Adrenal gland (tissue), 19 donors: ENCODE measurements at regions of chr11 and their contacts with region 1.

Region 1: GRCh38 chr11:17598700-17599459 is 51.8 kb downstream of the OTOG start:
- DNase-seq: peak; percentile 46 to 82 (median 73)
- H3K4me3 ChIP-seq: no peak overlapping the region
- H3K27ac ChIP-seq: no peak overlapping the region
- H3K4me1 ChIP-seq: no peaks in the 10 kb centered on the region
- H3K27me3 ChIP-seq: no peaks in the 10 kb centered on the region
- CTCF ChIP-seq: peak; percentile 66 to 92 (median 82)
- POLR2A ChIP-seq: no peak

Region 2: DNA sequence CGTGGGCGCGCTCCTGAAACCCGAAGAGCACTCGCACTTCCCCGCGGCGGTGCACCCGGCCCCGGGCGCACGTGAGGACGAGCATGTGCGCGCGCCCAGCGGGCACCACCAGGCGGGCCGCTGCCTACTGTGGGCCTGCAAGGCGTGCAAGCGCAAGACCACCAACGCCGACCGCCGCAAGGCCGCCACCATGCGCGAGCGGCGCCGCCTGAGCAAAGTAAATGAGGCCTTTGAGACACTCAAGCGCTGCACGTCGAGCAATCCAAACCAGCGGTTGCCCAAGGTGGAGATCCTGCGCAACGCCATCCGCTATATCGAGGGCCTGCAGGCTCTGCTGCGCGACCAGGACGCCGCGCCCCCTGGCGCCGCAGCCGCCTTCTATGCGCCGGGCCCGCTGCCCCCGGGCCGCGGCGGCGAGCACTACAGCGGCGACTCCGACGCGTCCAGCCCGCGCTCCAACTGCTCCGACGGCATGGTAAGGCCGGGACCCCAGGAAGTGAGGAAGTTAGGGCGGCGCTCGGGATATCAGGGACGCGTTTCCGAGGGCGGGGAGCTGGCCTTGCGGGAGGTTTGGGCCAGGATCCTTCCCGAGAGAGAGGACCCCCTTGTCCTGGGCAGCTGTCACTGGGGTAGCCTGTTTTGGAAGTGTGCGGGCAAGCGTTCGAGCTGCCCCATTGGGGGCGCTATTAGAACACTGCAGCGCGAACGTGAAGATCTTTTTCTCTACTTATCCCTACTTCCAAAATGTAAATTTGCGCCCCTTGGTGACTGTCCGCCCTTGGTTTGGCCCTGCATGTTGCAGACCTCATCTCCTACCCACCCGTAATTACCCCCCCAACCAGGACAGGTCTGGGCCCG is 121.3 kb after region 1 on chr11:
- intact Hi-C with region 1: loop called in 1 of 2 experiments (anchors 10 kb)
- DNase-seq: no peak
- H3K4me3 ChIP-seq: no peak overlapping the region
- H3K27ac ChIP-seq: no peak overlapping the region
- H3K4me1 ChIP-seq: peaks cover 0 to 5% of the 10 kb centered on the region in 2 donors
- H3K27me3 ChIP-seq: peaks cover 59% of the 10 kb centered on the region
- CTCF ChIP-seq: no peak
- POLR2A ChIP-seq: no peak

Region 3: GRCh38 chr11:17972987-17973386 is 374.1 kb after region 1 on chr11:
- intact Hi-C with region 1: loop called (anchors 5 kb)
- DNase-seq: peak; percentile 61 to 86 (median 73)
- H3K4me3 ChIP-seq: no peak overlapping the region
- H3K27ac ChIP-seq: no peak overlapping the region
- H3K4me1 ChIP-seq: peaks cover 0 to 8% of the 10 kb centered on the region in 2 donors
- H3K27me3 ChIP-seq: no peaks in the 10 kb centered on the region
- CTCF ChIP-seq: peak in 5 of 6 experiments; percentile 44 to 69 (median 59)
- POLR2A ChIP-seq: no peak

Region 4: DNA sequence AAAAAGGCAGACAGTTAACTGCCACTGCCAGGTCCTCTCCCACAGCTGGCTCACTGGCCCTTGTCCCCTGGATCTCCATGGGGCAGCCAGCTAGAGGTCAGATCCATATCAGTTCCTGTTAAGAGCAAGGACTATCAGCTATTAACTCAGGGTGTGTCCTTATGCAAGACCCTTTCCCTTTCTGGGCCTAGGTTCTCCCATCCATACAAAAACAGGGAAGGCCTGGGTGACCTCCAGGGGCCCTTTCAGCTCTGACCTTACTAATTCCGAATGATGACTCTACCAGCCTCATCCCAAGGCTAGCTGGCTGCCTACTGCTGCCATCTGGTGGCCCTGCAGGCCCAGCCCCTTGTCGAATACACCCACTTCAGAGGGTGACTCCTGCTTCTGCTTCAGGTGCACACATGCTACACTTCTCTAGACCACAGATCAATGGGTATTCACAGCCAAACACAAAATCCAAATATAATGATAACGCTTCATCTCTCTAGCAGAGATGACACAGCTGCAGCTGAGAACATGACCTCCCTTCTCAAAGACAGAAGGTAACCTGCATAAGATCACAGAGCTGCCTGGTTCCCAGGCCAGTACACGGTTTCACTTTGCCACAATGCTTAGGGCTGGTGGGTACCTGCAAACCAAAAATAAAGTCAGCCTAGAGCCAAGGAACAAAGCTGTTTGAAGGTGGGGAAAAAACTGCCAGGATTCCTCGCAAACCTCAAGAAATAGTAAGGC is 379.8 kb after region 1 on chr11:
- intact Hi-C with region 1: loop called (anchors 5 kb)
- DNase-seq: peak; percentile 60 to 87 (median 72)
- H3K4me3 ChIP-seq: no peak overlapping the region
- H3K27ac ChIP-seq: no peak overlapping the region
- H3K4me1 ChIP-seq: no peaks in the 10 kb centered on the region
- H3K27me3 ChIP-seq: no peaks in the 10 kb centered on the region
- CTCF ChIP-seq: peak; percentile 68 to 81 (median 71)
- POLR2A ChIP-seq: no peak